Activated naive CD4-positive, alpha-beta T cell treated with anti-CD3 and anti-CD28 coated beads for 36 hours (primary cell): ENCODE measurements at regions of chr4 and their contacts with region 1.

Region 1: DNA sequence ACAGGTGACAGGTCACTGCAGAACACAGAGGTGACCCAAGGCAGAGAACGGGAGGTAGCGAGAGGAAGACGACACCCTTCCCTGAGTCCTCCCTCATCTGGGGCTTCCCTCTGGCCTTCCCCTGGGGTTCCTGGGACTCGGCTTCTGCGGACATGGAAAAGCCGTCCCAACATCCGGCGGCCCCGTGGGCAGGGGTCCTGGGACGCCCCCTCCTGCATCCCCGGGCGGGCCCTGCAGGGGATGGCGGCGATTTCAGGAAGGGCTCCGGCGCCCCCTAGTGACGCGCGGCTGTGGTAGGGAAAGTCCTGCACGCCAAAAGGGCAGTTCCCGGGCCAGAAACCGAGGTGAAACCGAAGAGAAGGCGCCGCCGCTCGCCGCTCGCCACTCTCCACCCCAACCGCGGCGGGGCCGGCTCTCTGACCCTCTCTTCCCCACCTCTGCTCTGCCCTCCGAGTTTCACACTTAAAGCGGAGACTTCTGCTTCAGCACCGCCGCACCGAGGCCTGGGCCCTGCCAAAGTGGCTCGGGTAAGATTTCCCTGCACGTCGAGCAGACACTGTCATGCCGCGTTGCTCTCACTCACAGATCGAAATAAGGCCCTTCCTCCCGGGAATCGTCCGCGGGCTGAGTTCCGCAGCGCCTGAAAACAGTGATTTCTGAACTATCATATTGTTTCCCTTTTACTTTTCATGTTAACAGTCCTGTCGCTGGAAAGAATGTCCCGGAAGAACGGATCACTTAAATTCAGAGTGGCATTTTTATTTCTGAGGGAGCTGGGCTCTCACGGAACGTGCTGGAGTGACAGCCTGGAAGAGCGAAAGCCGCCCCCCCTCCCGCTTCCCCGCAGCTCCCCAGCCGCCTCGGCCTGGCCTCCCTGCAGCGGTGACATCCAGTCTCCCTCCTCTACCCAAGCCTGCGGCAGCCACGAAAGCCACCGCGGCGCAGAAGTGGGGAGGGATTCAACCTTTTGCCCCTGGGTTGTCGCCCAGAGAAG is 110.6 kb downstream of the DCTD start:
- DNase-seq: peak; percentile 77
- H3K4me3 Mint-ChIP-seq: peak overlapping the region; percentile 77
- H3K27ac Mint-ChIP-seq: no peak overlapping the region
- H3K4me1 Mint-ChIP-seq: peaks cover 17% of the 10 kb centered on the region
- H3K27me3 Mint-ChIP-seq: no peaks in the 10 kb centered on the region

Region 2: DNA sequence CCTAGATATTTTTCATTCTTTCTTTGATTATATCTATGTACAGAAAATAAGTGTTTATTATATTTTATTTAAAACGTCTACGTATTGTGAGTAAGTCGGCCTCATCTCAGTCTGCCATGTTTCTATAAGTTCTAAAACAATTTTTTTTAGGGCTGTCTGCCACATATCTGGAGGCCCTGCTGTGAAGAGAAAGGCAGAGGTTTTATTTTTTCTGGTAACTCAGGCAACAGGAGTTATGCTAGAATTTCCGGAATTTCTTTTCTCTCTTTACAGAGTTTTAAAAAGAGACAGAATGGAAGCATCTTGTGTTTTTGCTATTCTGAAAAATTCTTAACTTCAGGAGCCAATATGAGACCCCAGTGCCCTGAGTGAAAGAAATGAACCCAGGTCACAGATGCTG is 1687.4 kb before region 1 on chr4:
- CTCF ChIA-PET with region 1: no interaction called
- intact Hi-C with region 1: no loop called
- DNase-seq: no peak
- H3K4me3 Mint-ChIP-seq: no peak overlapping the region
- H3K27ac Mint-ChIP-seq: no peak overlapping the region
- H3K4me1 Mint-ChIP-seq: no peaks in the 10 kb centered on the region
- H3K27me3 Mint-ChIP-seq: no peaks in the 10 kb centered on the region

Region 3: DNA sequence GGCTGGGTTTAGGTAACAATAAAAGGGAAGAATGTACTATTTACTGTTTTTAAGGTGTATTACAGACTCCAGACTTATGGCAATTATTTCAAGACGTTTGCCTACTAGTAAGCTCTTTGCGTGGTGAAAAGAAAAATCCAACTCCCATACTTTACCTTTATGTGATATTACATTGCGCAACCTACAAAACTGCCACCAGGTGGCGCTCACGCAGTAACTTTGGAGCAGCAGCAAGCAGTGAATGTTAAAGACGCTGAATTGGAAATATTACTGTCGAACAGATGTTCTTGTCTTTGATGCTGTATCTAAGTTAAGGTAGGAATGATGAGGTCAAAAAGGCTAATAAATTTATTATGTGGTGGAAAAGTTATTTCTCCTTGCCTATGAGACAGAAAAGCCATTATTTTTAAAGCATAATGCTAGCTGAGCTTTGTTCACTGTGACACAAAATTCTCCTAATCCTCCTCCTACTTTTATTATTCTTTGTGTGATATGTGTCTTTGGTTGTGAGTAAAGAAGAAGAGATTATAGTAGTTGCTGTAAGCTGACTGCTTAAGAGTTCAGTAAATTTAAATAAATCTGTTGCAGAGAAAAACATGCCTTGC is 1663.2 kb before region 1 on chr4:
- CTCF ChIA-PET with region 1: no interaction called
- intact Hi-C with region 1: loop called (anchors 2 kb)
- DNase-seq: peak; percentile 82
- H3K4me3 Mint-ChIP-seq: no peak overlapping the region
- H3K27ac Mint-ChIP-seq: no peak overlapping the region
- H3K4me1 Mint-ChIP-seq: no peaks in the 10 kb centered on the region
- H3K27me3 Mint-ChIP-seq: peaks cover 7% of the 10 kb centered on the region

Region 4: GRCh38 chr4:181301735-181302710 is 1504.5 kb before region 1 on chr4:
- CTCF ChIA-PET with region 1: interaction called, 4 read pairs
- intact Hi-C with region 1: loop called (anchors 2 kb)
- DNase-seq: peak; percentile 35
- H3K4me3 Mint-ChIP-seq: no peak overlapping the region
- H3K27ac Mint-ChIP-seq: no peak overlapping the region
- H3K4me1 Mint-ChIP-seq: no peaks in the 10 kb centered on the region
- H3K27me3 Mint-ChIP-seq: no peaks in the 10 kb centered on the region

Region 5: GRCh38 chr4:182478475-182478874 is 328.1 kb before region 1 on chr4:
- CTCF ChIA-PET with region 1: interaction called, 4 read pairs
- intact Hi-C with region 1: loop called (anchors 1 kb)
- DNase-seq: no peak
- H3K4me3 Mint-ChIP-seq: no peak overlapping the region
- H3K27ac Mint-ChIP-seq: no peak overlapping the region
- H3K4me1 Mint-ChIP-seq: no peaks in the 10 kb centered on the region
- H3K27me3 Mint-ChIP-seq: peaks cover 14% of the 10 kb centered on the region

Region 6: GRCh38 chr4:182492422-182492821 is 314.1 kb before region 1 on chr4:
- CTCF ChIA-PET with region 1: no interaction called
- intact Hi-C with region 1: no loop called
- DNase-seq: no peak
- H3K4me3 Mint-ChIP-seq: no peak overlapping the region
- H3K27ac Mint-ChIP-seq: no peak overlapping the region
- H3K4me1 Mint-ChIP-seq: peaks cover 10% of the 10 kb centered on the region
- H3K27me3 Mint-ChIP-seq: peaks cover 8% of the 10 kb centered on the region

Region 7: GRCh38 chr4:182823576-182823975 is 17.0 kb after region 1 on chr4:
- CTCF ChIA-PET with region 1: no interaction called
- intact Hi-C with region 1: no loop called
- DNase-seq: no peak
- H3K4me3 Mint-ChIP-seq: no peak overlapping the region
- H3K27ac Mint-ChIP-seq: no peak overlapping the region
- H3K4me1 Mint-ChIP-seq: peaks cover 6% of the 10 kb centered on the region
- H3K27me3 Mint-ChIP-seq: peaks cover 13% of the 10 kb centered on the region

Region 8: DNA sequence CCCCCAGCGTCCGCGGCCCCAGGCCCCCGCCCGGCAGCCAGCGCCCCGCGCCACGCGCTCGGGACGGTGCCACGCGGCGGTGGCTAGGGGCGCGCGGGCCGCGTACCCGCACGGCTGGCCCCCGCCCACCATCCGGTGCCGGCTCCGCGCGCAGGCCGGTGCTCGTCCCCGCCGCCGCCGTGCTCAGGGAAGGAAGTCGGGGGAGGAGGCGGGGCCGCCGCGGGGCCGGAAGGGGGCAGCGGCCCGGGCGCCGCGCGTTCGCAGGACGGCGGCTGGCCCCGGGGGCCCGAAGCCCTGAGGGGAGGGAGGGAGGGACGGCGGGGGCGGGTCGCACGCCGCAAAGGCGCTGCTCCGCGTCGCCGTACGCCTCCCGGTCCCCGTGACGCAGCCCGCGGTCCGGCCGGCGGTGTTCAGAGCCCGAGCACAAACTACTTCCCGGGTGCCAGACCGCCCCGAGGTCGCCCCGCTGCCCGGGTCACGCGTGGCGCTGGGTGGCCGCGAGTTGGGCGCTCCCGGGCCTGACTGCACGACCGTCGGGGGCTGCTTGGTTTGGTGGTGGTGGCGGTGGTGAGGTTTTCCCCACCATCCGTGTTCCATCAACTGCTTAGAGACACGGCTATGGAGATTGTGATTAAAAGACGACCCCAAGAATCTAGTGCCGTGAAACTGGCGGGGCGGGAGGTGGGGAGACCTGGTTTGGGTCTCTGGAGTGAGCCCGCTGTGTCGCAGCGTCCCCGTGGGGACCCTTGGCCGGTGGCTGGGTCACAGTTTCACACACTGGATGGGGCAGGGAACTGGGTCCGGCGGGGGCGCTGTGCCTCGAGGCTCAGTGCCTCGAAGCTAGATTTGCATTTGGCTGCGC is 110.9 kb after region 1 on chr4 and contains the start of gene DCTD:
- CTCF ChIA-PET with region 1: interaction called, 3 read pairs
- intact Hi-C with region 1: loop called (anchors 1 kb)
- DNase-seq: peak; percentile 83
- H3K4me3 Mint-ChIP-seq: peak within 1 kb of the TSS; percentile 86
- H3K27ac Mint-ChIP-seq: peak within 1 kb of the TSS; percentile 92
- H3K4me1 Mint-ChIP-seq: peaks cover 53% of the 10 kb centered on the region
- H3K27me3 Mint-ChIP-seq: no peaks in the 10 kb centered on the region
- total RNA-seq, gene DCTD: 137 to 152 TPM